H1 (cell line): ENCODE measurements at regions of chr17 and their contacts with region 1.

Region 1: GRCh38 chr17:42508426-42509165 is 27.4 kb upstream of the NAGLU start:
- DNase-seq: no peak
- H3K4me3 ChIP-seq: no peak overlapping the region
- H3K27ac ChIP-seq: no peak overlapping the region
- H3K4me1 ChIP-seq: no peaks in the 10 kb centered on the region
- H3K27me3 ChIP-seq: no peaks in the 10 kb centered on the region
- CTCF ChIP-seq: no peak
- EP300 ChIP-seq: no peak
- POLR2A ChIP-seq: no peak
- RAD21 ChIP-seq: no peak

Region 2: GRCh38 chr17:42472709-42473521 is 35.7 kb before region 1 on chr17:
- CTCF ChIA-PET with region 1: no interaction called
- POLR2A ChIA-PET with region 1: no interaction called
- DNase-seq: no peak
- H3K4me3 ChIP-seq: no peak overlapping the region
- H3K27ac ChIP-seq: no peak overlapping the region
- H3K4me1 ChIP-seq: no peaks in the 10 kb centered on the region
- H3K27me3 ChIP-seq: no peaks in the 10 kb centered on the region
- CTCF ChIP-seq: no peak
- EP300 ChIP-seq: no peak
- POLR2A ChIP-seq: no peak
- RAD21 ChIP-seq: no peak

Region 3: GRCh38 chr17:42485680-42486079 is 22.9 kb before region 1 on chr17:
- CTCF ChIA-PET with region 1: interaction called, 13 read pairs
- POLR2A ChIA-PET with region 1: interaction called, 3 read pairs
- DNase-seq: no peak
- H3K4me3 ChIP-seq: no peak overlapping the region
- H3K27ac ChIP-seq: no peak overlapping the region
- H3K4me1 ChIP-seq: no peaks in the 10 kb centered on the region
- H3K27me3 ChIP-seq: no peaks in the 10 kb centered on the region
- CTCF ChIP-seq: no peak
- EP300 ChIP-seq: no peak
- POLR2A ChIP-seq: no peak
- RAD21 ChIP-seq: no peak

Region 4: GRCh38 chr17:42554250-42555121 is 45.9 kb after region 1 on chr17:
- CTCF ChIA-PET with region 1: no interaction called
- POLR2A ChIA-PET with region 1: no interaction called
- DNase-seq: peak in 1 of 2 experiments; percentile 95
- H3K4me3 ChIP-seq: peak overlapping the region; percentile 61 to 84 (median 71)
- H3K27ac ChIP-seq: peak overlapping the region; percentile 53; the same call in 1 of the 2 replicates
- H3K4me1 ChIP-seq: peaks cover 0 to 9% (median 6%) of the 10 kb centered on the region in 4 experiments; a peak in 6 of 7 replicates
- H3K27me3 ChIP-seq: no peaks in the 10 kb centered on the region; a peak in 1 of 7 replicates
- CTCF ChIP-seq: no peak
- EP300 ChIP-seq: no peak
- POLR2A ChIP-seq: peak in 1 of 2 experiments; percentile 70; a peak in 2 of 3 replicates
- RAD21 ChIP-seq: no peak